Heart left ventricle (tissue), 16 donors: ENCODE measurements at regions of chr6 and their contacts with region 1.

Region 1: DNA sequence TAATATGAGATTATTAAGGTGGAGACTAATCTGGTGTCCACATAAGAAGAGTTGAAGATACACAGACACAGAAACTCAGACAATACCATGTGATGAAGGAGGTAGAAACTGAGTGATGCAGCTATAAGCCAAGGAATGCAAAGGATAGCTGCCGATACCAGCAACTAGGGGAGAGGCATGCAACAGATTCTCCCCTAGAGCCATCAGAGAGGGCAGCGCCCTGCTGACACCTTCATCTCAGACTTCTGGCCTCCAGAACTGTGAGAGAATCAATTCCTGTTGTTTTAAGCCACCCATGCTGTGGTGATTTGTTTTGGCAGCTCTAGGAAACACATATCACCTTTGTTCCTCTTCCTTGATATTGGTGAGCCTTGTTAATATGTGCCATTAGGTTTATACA is 41.5 kb downstream of the STXBP5 start:
- DNase-seq: no peak
- ATAC-seq: no peak
- H3K4me3 ChIP-seq: no peak overlapping the region
- H3K27ac ChIP-seq: no peak overlapping the region
- H3K4me1 ChIP-seq: peaks cover 0 to 6% (median 0%) of the 10 kb centered on the region in 12 donors
- H3K27me3 ChIP-seq: no peaks in the 10 kb centered on the region
- CTCF ChIP-seq: no peak
- POLR2A ChIP-seq: no peak

Region 2: DNA sequence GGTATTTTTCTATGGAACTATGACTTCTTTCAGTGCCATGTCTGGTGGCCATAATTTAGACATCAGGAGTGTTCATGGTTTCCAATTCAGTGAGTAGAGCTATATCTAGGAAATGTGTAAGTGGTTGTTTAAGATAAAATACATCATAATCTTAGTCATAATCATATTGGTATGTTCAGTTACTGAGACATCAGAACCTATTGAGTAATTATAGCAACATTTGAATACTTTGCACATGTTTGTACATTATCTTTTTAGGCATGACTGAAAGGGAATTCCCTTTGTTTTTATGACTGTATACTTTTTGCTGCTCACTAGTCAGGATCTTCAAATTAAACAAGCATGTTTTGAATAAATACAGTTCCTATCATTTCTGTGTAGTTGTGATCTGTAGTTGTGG is 22.6 kb after region 1 on chr6:
- intact Hi-C with region 1: loop called in 1 of 10 experiments (anchors 2 kb)
- DNase-seq: no peak
- ATAC-seq: no peak
- H3K4me3 ChIP-seq: no peak overlapping the region
- H3K27ac ChIP-seq: no peak overlapping the region
- H3K4me1 ChIP-seq: no peaks in the 10 kb centered on the region
- H3K27me3 ChIP-seq: no peaks in the 10 kb centered on the region
- CTCF ChIP-seq: no peak
- POLR2A ChIP-seq: no peak